Gastrocnemius medialis (tissue), 4 donors: ENCODE measurements at regions of chr3 and their contacts with region 1.

Region 1: GRCh38 chr3:177835008-177835407 is 637.7 kb upstream of the TBL1XR1 start:
- DNase-seq: no peak
- ATAC-seq: no peak
- H3K4me3 ChIP-seq: no peak overlapping the region
- H3K27ac ChIP-seq: no peak overlapping the region
- H3K4me1 ChIP-seq: peaks cover 3 to 11% of the 10 kb centered on the region in 2 donors
- H3K27me3 ChIP-seq: no peaks in the 10 kb centered on the region
- CTCF ChIP-seq: no peak
- POLR2A ChIP-seq: no peak

Region 2: DNA sequence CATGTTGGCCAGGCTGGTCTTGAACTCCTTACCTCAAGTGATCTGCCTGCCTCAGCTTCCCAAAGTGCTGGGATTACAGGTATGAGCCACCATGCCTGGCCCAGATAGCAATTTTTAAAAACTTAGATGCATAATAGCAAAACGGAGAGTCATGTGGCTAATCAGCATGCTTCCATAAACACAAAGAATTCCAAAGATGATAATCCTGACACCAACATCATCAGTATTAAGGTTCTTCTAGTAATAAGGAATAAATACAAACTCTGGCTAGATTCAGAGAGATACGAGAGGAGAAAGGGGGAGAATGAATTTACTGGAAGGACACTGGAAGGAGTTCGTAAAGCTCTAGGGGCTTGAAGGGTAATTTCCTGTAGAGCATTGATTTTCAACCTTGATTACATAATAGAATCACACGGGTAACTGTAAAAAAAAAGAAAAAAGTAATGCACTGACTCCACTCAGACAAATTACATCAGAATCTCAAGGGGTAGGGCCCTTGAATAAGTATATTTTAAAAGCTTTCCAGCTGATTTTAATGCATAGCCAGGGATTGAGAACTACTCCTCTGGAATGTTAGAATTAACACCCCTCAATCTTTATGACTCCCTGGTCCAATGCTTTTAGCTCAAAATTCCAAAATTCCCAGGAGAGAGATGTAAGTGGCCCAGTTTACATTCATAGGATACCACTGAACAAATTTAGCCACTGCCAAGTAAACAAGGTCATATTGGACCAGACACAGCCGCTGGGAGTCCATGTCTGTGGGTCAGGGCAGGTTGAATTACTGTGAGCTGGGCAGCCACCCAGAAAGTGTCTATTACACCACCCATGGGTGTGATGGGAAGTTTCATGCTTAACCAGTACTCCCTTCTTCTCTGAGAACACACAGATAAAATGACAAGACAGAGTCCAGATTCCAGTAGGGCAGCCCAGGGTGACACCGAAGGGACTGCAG is 881.6 kb before region 1 on chr3:
- in situ Hi-C with region 1: no loop called
- intact Hi-C with region 1: loop called (anchors 5 kb)
- DNase-seq: peak; percentile 87 to 93
- ATAC-seq: peak; percentile 84 to 86
- H3K4me3 ChIP-seq: no peak overlapping the region
- H3K27ac ChIP-seq: peak overlapping the region; percentile 53 to 80 (median 68)
- H3K4me1 ChIP-seq: peaks cover 42% of the 10 kb centered on the region in 2 donors
- H3K27me3 ChIP-seq: no peaks in the 10 kb centered on the region
- CTCF ChIP-seq: no peak
- POLR2A ChIP-seq: no peak

Region 3: DNA sequence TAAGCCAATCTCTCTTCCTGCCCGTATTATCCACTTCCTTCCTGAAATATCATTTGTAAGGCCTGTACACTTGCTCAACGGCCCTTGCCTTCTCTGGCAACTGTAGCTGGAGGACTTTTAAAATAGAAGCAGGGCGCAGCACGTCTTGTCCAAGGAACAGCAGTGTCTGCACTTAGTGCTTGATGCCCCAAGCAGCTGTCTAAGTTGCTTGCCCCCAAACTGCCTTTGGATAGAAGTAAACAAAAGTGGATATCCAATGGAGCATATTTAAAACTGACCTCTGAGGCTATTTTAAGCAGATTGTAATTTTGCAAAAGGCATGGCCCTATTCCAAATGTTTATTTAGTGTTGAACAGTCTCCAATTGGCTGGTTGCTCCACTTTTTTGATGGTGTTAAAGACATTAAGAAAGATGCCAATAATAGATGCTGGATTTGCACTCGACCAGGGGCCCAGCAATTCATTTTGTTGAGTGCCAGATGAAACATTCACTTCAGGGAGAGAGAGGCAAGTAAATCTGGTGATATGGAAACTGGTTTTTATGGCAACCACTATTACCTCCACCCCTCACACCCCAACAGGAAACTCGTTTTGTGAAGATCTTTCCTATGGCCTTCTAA is 110.9 kb before region 1 on chr3:
- in situ Hi-C with region 1: no loop called
- intact Hi-C with region 1: loop called (anchors 2 kb)
- DNase-seq: peak; percentile 94
- ATAC-seq: peak; percentile 93 to 97
- H3K4me3 ChIP-seq: no peak overlapping the region
- H3K27ac ChIP-seq: peak overlapping the region; percentile 84 to 87 (median 86)
- H3K4me1 ChIP-seq: peaks cover 46 to 60% of the 10 kb centered on the region in 2 donors
- H3K27me3 ChIP-seq: no peaks in the 10 kb centered on the region
- CTCF ChIP-seq: no peak
- POLR2A ChIP-seq: peak in 1 of 2 donors; percentile 59

Region 4: GRCh38 chr3:178146406-178146831 is 311.4 kb after region 1 on chr3:
- in situ Hi-C with region 1: no loop called
- intact Hi-C with region 1: no loop called
- DNase-seq: no peak
- ATAC-seq: no peak
- H3K4me3 ChIP-seq: no peak overlapping the region
- H3K27ac ChIP-seq: no peak overlapping the region
- H3K4me1 ChIP-seq: no peaks in the 10 kb centered on the region
- H3K27me3 ChIP-seq: no peaks in the 10 kb centered on the region
- CTCF ChIP-seq: no peak
- POLR2A ChIP-seq: no peak